Sigmoid colon (tissue), 7 donors: ENCODE measurements at regions of chr18 and their contacts with region 1.

Region 1: DNA sequence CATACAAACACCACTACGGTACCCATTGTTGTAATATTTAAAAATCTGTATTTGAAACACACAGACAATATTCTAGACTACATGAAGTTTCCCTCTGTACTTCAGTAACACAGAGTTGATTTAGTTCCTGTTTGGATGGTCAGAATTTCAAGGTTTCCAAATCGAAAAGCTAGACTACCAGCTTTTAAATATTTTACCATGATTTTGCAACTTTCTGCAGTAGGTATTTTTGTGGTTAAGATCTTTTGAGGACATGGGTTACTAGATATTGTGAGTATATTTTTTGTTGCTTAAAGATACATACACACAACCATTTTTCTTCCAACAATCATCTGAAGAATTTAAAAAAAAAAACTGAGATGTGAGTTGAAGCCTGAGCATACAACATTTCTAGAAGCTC is 10.9 kb downstream of the SERPINB5 start:
- DNase-seq: no peak
- H3K4me3 ChIP-seq: no peak overlapping the region
- H3K27ac ChIP-seq: peak overlapping the region in 2 of 4 donors; percentile 68 to 77
- H3K4me1 ChIP-seq: peaks cover 0 to 42% (median 26%) of the 10 kb centered on the region in 4 donors
- H3K27me3 ChIP-seq: no peaks in the 10 kb centered on the region
- CTCF ChIP-seq: no peak
- EP300 ChIP-seq: no peak
- POLR2A ChIP-seq: no peak

Region 2: DNA sequence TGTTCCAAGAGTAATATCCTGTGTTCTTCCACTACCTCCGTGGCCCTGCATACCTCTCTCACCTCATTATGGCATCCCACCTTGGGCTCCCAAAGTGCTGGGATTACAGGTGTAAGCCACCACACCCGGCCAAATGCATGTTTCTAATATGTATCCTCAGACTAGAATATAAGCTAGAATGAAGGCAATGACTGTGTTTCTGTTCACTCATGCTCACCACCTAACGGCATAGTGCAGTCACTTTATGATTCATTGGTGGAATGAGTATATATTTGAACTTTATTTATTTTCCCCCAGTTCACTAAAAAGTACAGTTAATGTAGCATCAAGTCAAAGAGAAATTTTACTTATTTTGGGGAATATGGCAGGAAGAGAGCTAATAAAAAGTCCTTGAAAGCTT is 1312.2 kb before region 1 on chr18:
- intact Hi-C with region 1: no loop called
- DNase-seq: no peak
- H3K4me3 ChIP-seq: no peak overlapping the region
- H3K27ac ChIP-seq: no peak overlapping the region
- H3K4me1 ChIP-seq: no peaks in the 10 kb centered on the region
- H3K27me3 ChIP-seq: no peaks in the 10 kb centered on the region
- CTCF ChIP-seq: no peak
- EP300 ChIP-seq: no peak
- POLR2A ChIP-seq: no peak

Region 3: DNA sequence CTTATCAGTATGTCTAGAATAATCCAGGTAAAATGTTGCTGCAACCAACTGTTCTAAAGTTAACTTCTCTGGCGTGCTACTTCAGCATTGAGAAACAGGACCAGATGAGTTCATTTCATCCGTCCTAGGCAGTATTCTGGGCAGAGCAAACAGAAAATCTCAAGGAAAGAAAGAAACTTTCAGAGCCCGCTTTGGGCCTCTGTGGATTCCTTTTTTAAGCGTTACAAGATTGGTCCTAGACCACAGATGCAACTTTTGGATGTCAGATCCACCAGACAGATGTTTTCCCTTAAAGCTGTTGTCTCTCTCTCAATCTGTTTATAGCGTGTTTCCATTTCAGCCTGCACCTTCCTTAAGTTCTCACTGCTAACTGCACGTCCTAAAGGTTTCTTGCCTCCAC is 243.1 kb before region 1 on chr18:
- intact Hi-C with region 1: no loop called
- DNase-seq: no peak
- H3K4me3 ChIP-seq: no peak overlapping the region
- H3K27ac ChIP-seq: peak overlapping the region; percentile 23 to 50 (median 39)
- H3K4me1 ChIP-seq: peaks cover 0 to 14% (median under 1%) of the 10 kb centered on the region in 4 donors
- H3K27me3 ChIP-seq: no peaks in the 10 kb centered on the region
- CTCF ChIP-seq: no peak
- EP300 ChIP-seq: no peak
- POLR2A ChIP-seq: no peak

Region 4: GRCh38 chr18:63451799-63452660 is 35.6 kb before region 1 on chr18:
- intact Hi-C with region 1: loop called (anchors 5 kb)
- DNase-seq: peak; percentile 81
- H3K4me3 ChIP-seq: no peak overlapping the region
- H3K27ac ChIP-seq: peak overlapping the region in 3 of 4 donors; percentile 67 to 79 (median 75)
- H3K4me1 ChIP-seq: peaks cover 3 to 30% (median 27%) of the 10 kb centered on the region in 4 donors
- H3K27me3 ChIP-seq: no peaks in the 10 kb centered on the region
- CTCF ChIP-seq: no peak
- EP300 ChIP-seq: peak in 2 of 4 donors; percentile 68 to 78
- POLR2A ChIP-seq: no peak

Region 5: GRCh38 chr18:63817441-63818051 is 329.9 kb after region 1 on chr18:
- intact Hi-C with region 1: no loop called
- DNase-seq: no peak
- H3K4me3 ChIP-seq: no peak overlapping the region
- H3K27ac ChIP-seq: peak overlapping the region in 3 of 4 donors; percentile 22 to 70 (median 59)
- H3K4me1 ChIP-seq: peaks cover 2 to 45% (median 42%) of the 10 kb centered on the region in 4 donors
- H3K27me3 ChIP-seq: no peaks in the 10 kb centered on the region
- CTCF ChIP-seq: no peak
- EP300 ChIP-seq: no peak
- POLR2A ChIP-seq: no peak

Region 6: DNA sequence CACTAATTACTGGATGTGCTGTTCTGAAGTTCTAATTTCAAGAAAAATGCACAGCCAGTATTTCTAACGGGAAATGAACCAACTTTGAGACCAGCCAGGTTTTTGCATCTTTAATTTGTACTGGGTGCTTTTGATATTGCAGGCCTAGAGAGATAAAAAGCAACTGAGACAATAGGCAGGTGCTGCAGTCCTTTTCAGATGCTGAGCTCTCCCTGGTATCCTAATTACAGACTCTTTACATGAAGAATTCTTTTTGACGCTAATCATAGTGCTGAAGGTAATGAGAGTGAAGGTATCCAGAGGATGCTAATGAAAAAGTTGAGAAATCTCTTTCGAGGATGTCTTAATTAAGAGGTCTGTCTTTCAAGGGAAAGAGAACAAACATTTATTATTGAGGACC is 567.3 kb after region 1 on chr18:
- intact Hi-C with region 1: no loop called
- DNase-seq: no peak
- H3K4me3 ChIP-seq: no peak overlapping the region
- H3K27ac ChIP-seq: no peak overlapping the region
- H3K4me1 ChIP-seq: no peaks in the 10 kb centered on the region
- H3K27me3 ChIP-seq: no peaks in the 10 kb centered on the region
- CTCF ChIP-seq: no peak
- EP300 ChIP-seq: no peak
- POLR2A ChIP-seq: no peak